ENCODE measurements at regions of chr7 and their contacts with region 1.

Region 1: DNA sequence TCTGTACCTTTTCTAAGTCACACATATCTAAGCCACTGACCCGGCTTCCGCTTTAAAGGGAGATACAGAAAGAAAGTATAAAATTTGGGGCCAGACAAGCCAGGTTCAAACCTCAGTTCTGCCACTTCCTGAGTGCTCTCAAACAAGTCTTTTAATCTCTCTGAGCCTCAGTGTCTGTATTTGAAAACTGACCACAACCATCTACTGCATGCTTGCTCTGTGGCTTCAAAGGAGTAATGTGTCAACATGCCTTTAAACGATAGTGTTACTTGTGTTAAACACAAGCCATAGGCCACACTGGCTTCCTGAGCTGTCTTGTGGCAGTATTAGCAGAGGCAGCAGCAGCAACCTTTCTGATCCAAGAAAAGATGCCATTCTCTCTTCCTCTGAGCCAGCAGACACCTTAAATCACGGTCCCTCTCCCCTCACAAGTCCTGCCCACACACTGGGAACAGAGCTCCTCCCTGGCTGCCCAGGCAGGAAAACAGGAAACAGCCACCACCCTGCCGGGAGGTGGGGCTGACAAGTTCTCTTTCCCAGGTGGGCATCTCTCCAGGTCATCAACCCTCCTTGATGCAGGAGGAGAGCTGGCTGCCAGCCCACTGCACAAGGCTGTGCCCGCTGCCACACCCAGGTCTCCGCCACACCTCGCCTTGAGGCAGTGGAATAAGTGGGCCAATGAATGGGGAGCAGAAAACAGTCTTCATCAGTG is 10.7 kb downstream of the HIP1 start:
- DNase-seq: peak; percentile 94
- H3K4me3 Mint-ChIP-seq: peak overlapping the region; percentile 50
- H3K27ac Mint-ChIP-seq: peak overlapping the region; percentile 87
- H3K4me1 Mint-ChIP-seq: peaks cover 30% of the 10 kb centered on the region
- H3K27me3 Mint-ChIP-seq: no peaks in the 10 kb centered on the region
- CTCF ChIP-seq: no peak

Region 2: DNA sequence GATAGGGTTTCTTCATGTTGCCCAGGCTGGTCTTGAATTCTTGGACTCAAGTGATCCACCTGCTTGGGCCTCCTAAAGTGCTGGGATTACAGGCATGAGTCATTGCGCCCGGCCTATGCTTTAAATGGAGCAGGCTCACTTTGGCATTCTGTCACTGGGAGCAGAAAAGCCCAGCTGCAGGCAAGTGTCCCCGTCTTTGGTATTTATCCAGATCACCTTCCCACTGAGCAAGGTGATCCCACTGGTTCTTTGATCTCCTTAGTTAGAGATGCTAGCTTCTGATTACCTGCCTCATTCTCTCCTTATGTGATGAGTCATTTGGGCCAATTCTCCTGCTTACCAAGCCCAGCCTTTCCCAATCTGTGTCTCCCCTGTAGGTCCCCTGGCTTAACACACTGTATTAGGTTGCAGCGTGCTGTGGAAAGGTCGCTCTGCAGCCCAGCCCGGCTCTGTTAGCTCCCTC is 196.6 kb before region 1 on chr7:
- CTCF ChIA-PET with region 1: no interaction called
- POLR2A ChIA-PET with region 1: interaction called, 4 read pairs
- intact Hi-C with region 1: loop called (anchors 5 kb)
- DNase-seq: peak; percentile 50
- H3K4me3 Mint-ChIP-seq: no peak overlapping the region
- H3K27ac Mint-ChIP-seq: no peak overlapping the region
- H3K4me1 Mint-ChIP-seq: peaks cover 17% of the 10 kb centered on the region
- H3K27me3 Mint-ChIP-seq: no peaks in the 10 kb centered on the region
- CTCF ChIP-seq: no peak

Region 3: DNA sequence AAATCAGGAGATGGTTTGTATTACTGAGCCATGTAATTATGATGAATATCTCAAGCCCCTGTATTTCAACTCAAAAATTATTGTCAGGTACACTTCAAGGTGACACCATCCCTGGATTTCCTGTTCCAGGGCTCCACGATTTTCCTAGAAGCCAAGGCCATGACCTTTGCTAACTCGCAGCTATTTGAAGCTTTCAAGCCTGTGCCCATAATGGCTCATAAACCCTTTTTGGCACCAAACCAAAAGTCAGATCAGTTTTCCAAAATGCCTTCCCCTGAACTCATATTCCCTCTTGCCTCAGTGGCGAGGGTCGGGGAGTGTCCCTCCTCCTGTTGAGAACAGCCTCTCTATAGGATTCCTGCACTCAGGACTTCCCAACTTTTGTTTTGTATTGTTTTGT is 60.1 kb before region 1 on chr7:
- CTCF ChIA-PET with region 1: interaction called, 3 read pairs
- POLR2A ChIA-PET with region 1: interaction called, 5 read pairs
- intact Hi-C with region 1: loop called (anchors 5 kb)
- DNase-seq: peak; percentile 28
- H3K4me3 Mint-ChIP-seq: no peak overlapping the region
- H3K27ac Mint-ChIP-seq: no peak overlapping the region
- H3K4me1 Mint-ChIP-seq: peaks cover 12% of the 10 kb centered on the region
- H3K27me3 Mint-ChIP-seq: no peaks in the 10 kb centered on the region
- CTCF ChIP-seq: no peak

Region 4: GRCh38 chr7:75738987-75739795 is 11.2 kb after region 1 on chr7:
- CTCF ChIA-PET with region 1: interaction called, 4 read pairs
- POLR2A ChIA-PET with region 1: interaction called, 20 read pairs
- intact Hi-C with region 1: no loop called
- DNase-seq: peak; percentile 98
- H3K4me3 Mint-ChIP-seq: peak overlapping the region; percentile 84
- H3K27ac Mint-ChIP-seq: peak overlapping the region; percentile 78
- H3K4me1 Mint-ChIP-seq: peaks cover 11% of the 10 kb centered on the region
- H3K27me3 Mint-ChIP-seq: no peaks in the 10 kb centered on the region
- CTCF ChIP-seq: no peak

Region 5: DNA sequence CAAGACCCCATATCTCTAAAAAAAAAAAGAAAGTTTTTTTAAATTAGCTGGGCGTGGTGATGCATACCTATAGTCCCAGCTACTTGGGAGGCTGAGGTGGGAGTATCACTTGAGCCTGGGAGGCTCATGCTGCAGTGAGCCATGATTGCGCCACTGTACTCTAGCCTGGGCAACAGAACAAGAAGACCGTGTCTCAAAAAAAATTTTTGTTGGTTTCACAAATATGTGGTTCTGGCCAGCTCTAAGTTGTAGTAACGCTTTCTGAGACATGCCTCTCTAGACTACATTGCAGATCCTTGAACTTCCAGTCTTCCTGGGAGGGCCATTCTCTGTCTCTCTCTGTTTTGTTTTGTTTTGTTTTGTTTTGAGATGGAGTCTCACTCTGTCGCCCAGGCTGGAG is 126.2 kb after region 1 on chr7:
- CTCF ChIA-PET with region 1: no interaction called
- POLR2A ChIA-PET with region 1: no interaction called
- intact Hi-C with region 1: no loop called
- DNase-seq: peak; percentile 46
- H3K4me3 Mint-ChIP-seq: no peak overlapping the region
- H3K27ac Mint-ChIP-seq: no peak overlapping the region
- H3K4me1 Mint-ChIP-seq: peaks cover 8% of the 10 kb centered on the region
- H3K27me3 Mint-ChIP-seq: no peaks in the 10 kb centered on the region
- CTCF ChIP-seq: no peak

Measured in MCF 10A (cell line).